HepG2 (cell line): ENCODE measurements at regions of chr2 and their contacts with region 1.

Region 1: DNA sequence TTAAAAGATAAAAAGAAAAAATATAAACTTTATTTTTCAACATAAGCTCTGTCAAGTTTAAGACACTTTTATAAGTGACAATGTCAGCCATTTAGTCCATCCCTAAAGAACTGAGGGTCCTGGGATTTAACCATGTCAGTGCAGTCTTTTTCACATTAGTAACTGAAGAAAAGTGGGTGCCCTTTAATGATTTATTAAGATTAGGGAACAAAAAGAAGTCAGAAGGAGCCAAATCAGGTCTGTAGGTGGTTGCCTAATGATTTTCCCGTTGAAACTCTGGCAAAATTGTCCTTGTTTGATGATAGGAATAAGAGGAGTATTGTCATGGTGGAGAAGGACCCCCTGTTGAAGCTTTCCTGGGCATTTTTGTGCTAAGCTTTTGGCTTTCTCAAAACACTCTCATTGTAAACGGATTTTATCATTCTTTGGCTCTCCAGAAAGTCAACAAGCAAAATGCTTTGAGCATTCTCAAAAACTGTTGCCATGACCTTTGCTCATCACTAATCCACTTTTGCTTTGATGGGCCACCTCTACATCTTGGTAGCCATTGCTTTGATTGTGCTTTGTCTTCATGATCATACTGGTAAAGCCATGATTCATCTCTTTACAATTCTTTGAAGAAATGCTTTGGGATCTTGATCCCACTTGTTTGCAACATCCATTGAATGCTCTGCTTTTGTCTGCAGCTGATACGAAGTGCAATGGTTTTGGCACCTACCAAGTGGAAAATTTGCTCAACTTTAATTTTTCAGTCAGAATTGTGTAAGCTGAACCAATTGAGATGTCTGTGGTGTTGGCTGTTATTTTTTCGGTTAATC is 22.0 kb downstream of the TSPYL6 start:
- DNase-seq: peak; percentile 100
- ATAC-seq: peak; percentile 94
- H3K4me3 ChIP-seq: no peak overlapping the region
- H3K27ac ChIP-seq: peak overlapping the region; percentile 81
- H3K4me1 ChIP-seq: peaks cover 43% of the 10 kb centered on the region
- H3K27me3 ChIP-seq: no peaks in the 10 kb centered on the region
- CTCF ChIP-seq: no peak
- EP300 ChIP-seq: peak; percentile 63 to 98; a peak in 3 of 4 replicates
- POLR2A ChIP-seq: no peak
- RAD21 ChIP-seq: no peak

Region 2: DNA sequence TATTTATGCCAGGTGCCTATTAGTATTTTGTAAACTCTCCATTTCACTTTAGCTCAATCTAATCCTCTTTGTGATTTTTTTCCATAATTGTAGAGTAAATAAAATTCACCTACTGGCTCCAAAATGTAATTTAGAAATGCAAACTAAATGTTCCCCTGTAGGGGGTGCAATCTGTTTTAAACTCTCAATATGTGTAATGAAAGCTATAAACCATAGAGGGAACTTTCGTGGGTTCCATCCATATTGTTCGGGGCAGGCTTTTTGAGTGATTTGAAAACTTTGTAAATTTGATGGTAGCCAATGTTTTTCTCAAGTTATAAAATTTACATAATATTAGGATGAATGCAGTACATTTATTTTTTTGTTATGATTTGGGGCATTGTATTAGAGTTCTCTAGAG is 27.4 kb before region 1 on chr2:
- CTCF ChIA-PET with region 1: no interaction called
- POLR2A ChIA-PET with region 1: interaction called, 12 read pairs
- in situ Hi-C with region 1: no loop called
- intact Hi-C with region 1: loop called (anchors 1 kb)
- DNase-seq: peak; percentile 50
- ATAC-seq: no peak
- H3K4me3 ChIP-seq: no peak overlapping the region
- H3K27ac ChIP-seq: no peak overlapping the region
- H3K4me1 ChIP-seq: peaks cover 65% of the 10 kb centered on the region
- H3K27me3 ChIP-seq: no peaks in the 10 kb centered on the region
- CTCF ChIP-seq: peak; percentile 33; the same call in 1 of the 2 replicates
- EP300 ChIP-seq: no peak
- POLR2A ChIP-seq: no peak
- RAD21 ChIP-seq: peak; percentile 36; the same call in 1 of the 2 replicates